Spleen (tissue), 13 donors: ENCODE measurements at regions of chr16 and their contacts with region 1.

Region 1: GRCh38 chr16:81723098-81723723 is 55.9 kb upstream of the PLCG2 start:
- DNase-seq: peak; percentile 46
- H3K4me3 ChIP-seq: no peak overlapping the region
- H3K27ac ChIP-seq: no peak overlapping the region
- H3K4me1 ChIP-seq: peaks cover 6 to 27% (median 11%) of the 10 kb centered on the region in 6 donors
- H3K27me3 ChIP-seq: no peaks in the 10 kb centered on the region
- CTCF ChIP-seq: peak; percentile 57 to 87 (median 78)
- POLR2A ChIP-seq: no peak

Region 2: DNA sequence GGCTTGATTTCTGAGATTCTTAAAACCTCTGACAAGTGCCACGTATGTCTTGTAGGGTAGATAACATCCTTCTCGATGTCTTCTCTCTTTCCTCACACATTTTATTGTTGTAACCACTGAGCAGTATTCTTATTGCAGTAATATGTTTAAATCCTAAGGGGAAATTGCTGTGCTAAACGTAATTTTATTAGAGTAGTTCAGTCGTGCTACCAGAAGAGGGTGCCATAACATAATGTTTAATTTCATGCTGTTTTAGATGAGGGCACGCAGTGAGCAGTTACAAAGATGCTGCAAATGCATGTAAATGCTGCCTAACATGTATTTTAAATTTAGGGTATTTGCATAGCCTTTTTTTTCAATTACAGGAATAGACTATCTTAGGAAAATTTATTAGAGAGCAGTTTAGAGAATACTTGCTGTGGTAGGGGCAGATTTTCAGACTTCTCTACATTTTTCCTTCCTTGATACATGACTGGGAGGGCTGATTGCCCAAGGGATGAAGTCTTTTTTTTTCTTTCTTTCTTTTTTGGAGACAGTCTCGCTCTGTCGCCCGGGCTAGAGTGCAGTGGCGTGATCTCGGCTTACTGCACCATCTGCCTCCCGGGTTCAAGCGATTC is 356.8 kb before region 1 on chr16:
- intact Hi-C with region 1: loop called (anchors 5 kb)
- DNase-seq: no peak
- H3K4me3 ChIP-seq: no peak overlapping the region
- H3K27ac ChIP-seq: no peak overlapping the region
- H3K4me1 ChIP-seq: peaks cover 0 to 5% (median 0%) of the 10 kb centered on the region in 6 donors
- H3K27me3 ChIP-seq: no peaks in the 10 kb centered on the region
- CTCF ChIP-seq: peak; percentile 50 to 82 (median 74)
- POLR2A ChIP-seq: no peak

Region 3: GRCh38 chr16:81403616-81404373 is 319.4 kb before region 1 on chr16:
- intact Hi-C with region 1: loop called (anchors 5 kb)
- DNase-seq: peak; percentile 97
- H3K4me3 ChIP-seq: peak overlapping the region in 3 of 8 donors; percentile 22 to 59 (median 24)
- H3K27ac ChIP-seq: peak overlapping the region in 3 of 8 donors; percentile 4 to 58 (median 25)
- H3K4me1 ChIP-seq: peaks cover 7 to 26% (median 12%) of the 10 kb centered on the region in 6 donors
- H3K27me3 ChIP-seq: no peaks in the 10 kb centered on the region
- CTCF ChIP-seq: peak; percentile 96 to 98 (median 97)
- POLR2A ChIP-seq: no peak

Region 4: DNA sequence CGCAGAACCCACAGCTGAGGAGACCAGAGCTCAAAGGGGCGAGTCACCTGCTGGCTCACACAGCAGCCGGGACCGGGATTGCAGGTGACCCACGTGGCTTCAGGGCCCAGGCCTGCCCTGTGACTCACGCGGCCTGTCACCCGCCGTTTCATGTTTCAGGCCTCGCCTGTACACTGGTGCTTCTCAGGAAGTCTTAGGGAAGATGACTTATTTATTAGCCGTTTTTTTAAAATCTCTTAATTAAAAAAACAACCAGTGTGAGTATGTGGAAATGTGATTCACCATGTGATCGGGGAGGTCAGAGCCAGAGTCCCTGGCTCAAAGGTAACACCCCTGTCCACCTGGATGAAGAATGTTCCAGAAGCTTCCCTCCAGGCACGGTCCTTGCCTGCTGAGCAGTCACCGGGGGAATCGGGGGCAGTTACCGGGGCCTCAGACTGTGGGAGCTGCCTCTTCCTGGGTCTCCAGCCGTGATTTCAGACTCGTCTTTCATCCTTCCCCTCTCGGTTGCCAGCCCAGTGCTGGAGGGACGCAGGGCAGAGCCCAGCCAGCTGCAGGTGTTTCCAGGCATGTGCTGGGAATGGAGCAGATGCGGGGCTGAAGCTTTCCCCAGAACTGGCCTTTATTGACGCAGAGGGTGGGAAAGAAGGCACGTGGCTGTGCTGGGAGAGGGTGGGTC is 229.3 kb before region 1 on chr16:
- intact Hi-C with region 1: no loop called
- DNase-seq: peak; percentile 73
- H3K4me3 ChIP-seq: no peak overlapping the region
- H3K27ac ChIP-seq: peak overlapping the region in 6 of 8 donors; percentile 13 to 78 (median 72)
- H3K4me1 ChIP-seq: peaks cover 46 to 100% (median 96%) of the 10 kb centered on the region in 6 donors
- H3K27me3 ChIP-seq: no peaks in the 10 kb centered on the region
- CTCF ChIP-seq: no peak
- POLR2A ChIP-seq: no peak